ENCODE measurements at regions of chr4 and their contacts with region 1.

Region 1: GRCh38 chr4:122052677-122053076 is 99.5 kb upstream of the BLTP1 start:
- DNase-seq: no peak
- ATAC-seq: no peak
- H3K4me3 ChIP-seq: no peak overlapping the region
- H3K4me3 Mint-ChIP-seq: no peak overlapping the region
- H3K27ac ChIP-seq: no peak overlapping the region
- H3K27ac Mint-ChIP-seq: no peak overlapping the region
- H3K4me1 ChIP-seq: no peaks in the 10 kb centered on the region
- H3K4me1 Mint-ChIP-seq: no peaks in the 10 kb centered on the region
- H3K27me3 ChIP-seq: peaks cover 0 to 2% of the 10 kb centered on the region in 2 donors
- H3K27me3 Mint-ChIP-seq: peaks cover 0 to 10% (median 0%) of the 10 kb centered on the region in 5 donors

Region 2: DNA sequence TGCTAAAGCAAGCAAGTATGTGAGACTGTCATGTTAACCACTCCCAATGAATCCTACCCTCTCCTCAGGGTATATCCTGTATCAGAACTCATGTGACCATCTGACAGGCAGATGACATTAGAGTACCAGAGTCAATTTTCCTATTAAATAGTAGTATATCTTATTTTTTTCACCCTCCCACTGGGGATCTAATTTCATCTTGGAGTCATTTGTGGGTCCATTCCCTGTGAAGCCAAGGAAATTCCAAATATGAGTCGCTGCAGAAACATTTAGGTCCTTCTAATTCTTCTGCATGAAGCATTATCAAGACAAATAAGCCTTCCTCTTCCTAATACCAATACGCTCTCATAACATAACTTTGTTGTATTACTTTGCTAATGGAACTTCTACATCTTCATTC is 47.2 kb after region 1 on chr4:
- CTCF ChIA-PET with region 1: no interaction called
- POLR2A ChIA-PET with region 1: no interaction called
- intact Hi-C with region 1: loop called in 1 of 2 experiments (anchors 5 kb)
- DNase-seq: no peak
- ATAC-seq: no peak
- H3K4me3 ChIP-seq: no peak overlapping the region
- H3K4me3 Mint-ChIP-seq: no peak overlapping the region
- H3K27ac ChIP-seq: no peak overlapping the region
- H3K27ac Mint-ChIP-seq: no peak overlapping the region
- H3K4me1 ChIP-seq: no peaks in the 10 kb centered on the region
- H3K4me1 Mint-ChIP-seq: no peaks in the 10 kb centered on the region
- H3K27me3 ChIP-seq: no peaks in the 10 kb centered on the region
- H3K27me3 Mint-ChIP-seq: peaks cover 10 to 43% (median 18%) of the 10 kb centered on the region in 5 donors

Measured in naive thymus-derived CD4-positive, alpha-beta T cell (primary cell).